Left cardiac atrium (tissue), 4 donors: ENCODE measurements at regions of chr4 and their contacts with region 1.

Region 1: GRCh38 chr4:84971319-84971932 is 4.9 kb upstream of the WDFY3 start:
- DNase-seq: no peak
- ATAC-seq: no peak

Region 2: GRCh38 chr4:83473423-83473822 is 1498.0 kb before region 1 on chr4:
- intact Hi-C with region 1: no loop called
- DNase-seq: no peak
- ATAC-seq: no peak

Region 3: DNA sequence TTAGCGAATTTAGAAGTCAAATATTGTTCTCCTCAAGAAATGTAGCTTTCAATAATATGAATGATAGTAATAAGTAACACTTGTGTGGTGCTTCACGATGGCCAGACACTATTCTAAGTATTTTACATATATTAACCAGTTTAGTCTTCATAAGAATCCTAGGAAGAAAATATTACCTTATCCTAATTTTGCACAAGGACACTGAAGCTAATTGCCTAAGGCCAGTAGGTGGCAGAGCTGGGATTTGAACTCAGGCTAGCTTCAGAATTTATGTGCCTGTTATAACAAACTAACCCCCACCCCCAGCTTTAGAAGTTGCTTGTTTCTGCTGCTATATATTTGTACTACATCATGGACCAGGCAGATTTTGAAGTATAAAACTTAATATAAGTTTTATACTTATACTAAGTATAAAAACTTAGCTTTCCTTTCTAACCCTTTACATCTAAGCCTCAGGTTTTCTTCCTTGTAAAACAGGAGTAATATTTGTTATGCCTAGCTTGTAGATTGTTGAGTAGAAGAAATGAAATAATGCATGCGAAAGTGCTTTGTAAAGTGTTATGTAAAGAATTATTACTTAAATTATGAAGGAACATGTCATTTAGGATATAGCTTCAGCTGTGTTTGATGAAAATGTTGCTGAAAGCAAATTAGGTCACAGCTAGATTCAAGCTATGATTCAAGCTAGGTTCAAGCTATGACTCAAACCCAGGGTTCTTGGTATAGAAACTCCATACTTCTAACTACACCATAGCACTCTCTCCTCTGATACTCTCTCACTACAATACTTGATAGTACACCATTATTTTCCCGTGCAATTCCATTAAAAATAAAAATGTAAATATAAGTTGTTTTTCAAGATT is 392.7 kb before region 1 on chr4:
- intact Hi-C with region 1: loop called in 1 of 2 experiments (anchors 5 kb)
- DNase-seq: no peak
- ATAC-seq: no peak

Region 4: GRCh38 chr4:84750253-84750959 is 221.0 kb before region 1 on chr4:
- intact Hi-C with region 1: loop called (anchors 2 to 5 kb)
- DNase-seq: no peak
- ATAC-seq: peak; percentile 59 to 71

Region 5: GRCh38 chr4:85039526-85039925 is 68.1 kb after region 1 on chr4:
- intact Hi-C with region 1: no loop called
- DNase-seq: no peak
- ATAC-seq: no peak